Heart right ventricle (tissue), 16 donors: ENCODE measurements at regions of chr7 and their contacts with region 1.

Region 1: DNA sequence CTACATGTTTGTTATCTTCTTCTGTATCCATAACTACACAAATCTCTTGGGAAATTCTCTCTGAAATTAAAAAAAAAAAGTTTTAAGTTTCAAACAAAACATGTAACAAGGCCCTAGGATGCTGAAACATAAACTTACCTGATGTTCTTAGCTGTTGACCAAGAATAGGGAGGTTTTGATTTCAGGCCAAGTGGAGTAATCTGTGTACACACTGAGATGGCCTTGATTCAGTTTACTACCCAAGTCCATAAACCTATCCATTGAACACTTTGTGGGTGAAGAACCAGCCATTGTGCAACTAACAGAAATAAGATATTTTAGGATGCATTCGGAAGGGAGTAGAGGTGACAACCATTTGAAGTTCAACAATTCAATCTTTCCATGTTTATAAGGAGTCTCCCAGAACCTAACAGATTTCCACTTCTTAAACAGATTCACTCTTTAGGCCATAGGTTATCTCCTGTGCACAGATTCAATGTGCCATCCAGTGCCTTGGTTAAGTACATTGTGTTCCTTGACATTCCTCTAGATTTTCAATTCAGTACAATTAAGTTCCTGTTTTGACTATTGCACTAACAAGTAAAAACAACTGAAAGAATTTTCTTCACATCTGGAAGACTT is 143.1 kb downstream of the CRPPA start:
- DNase-seq: no peak
- ATAC-seq: no peak
- H3K4me3 ChIP-seq: no peak overlapping the region
- H3K27ac ChIP-seq: no peak overlapping the region
- H3K4me1 ChIP-seq: peaks cover 0 to 10% (median 0%) of the 10 kb centered on the region in 9 donors
- H3K27me3 ChIP-seq: no peaks in the 10 kb centered on the region
- CTCF ChIP-seq: no peak

Region 2: DNA sequence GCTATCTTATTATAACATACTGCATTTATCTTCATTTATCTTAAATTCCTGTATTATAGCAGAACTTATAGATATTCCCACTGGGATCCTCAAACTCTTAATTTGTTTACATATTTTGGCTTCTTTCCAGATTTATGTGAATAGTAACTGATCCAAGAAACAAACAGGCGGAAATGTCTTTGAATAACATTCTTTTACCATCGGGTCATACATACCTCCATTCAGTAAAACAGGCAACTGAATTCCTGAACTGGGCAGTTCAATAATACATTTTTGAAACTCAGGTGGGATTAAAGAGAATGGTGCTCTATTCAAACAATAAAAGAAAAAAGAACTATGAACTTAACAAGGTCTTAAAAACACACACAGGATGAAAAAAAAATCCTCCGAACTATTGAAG is 194.3 kb before region 1 on chr7:
- intact Hi-C with region 1: no loop called
- DNase-seq: no peak
- ATAC-seq: no peak
- H3K4me3 ChIP-seq: no peak overlapping the region
- H3K27ac ChIP-seq: peak overlapping the region in 2 of 10 donors; percentile 15 to 45
- H3K4me1 ChIP-seq: peaks cover 0 to 3% (median 0%) of the 10 kb centered on the region in 9 donors
- H3K27me3 ChIP-seq: no peaks in the 10 kb centered on the region
- CTCF ChIP-seq: no peak

Region 3: DNA sequence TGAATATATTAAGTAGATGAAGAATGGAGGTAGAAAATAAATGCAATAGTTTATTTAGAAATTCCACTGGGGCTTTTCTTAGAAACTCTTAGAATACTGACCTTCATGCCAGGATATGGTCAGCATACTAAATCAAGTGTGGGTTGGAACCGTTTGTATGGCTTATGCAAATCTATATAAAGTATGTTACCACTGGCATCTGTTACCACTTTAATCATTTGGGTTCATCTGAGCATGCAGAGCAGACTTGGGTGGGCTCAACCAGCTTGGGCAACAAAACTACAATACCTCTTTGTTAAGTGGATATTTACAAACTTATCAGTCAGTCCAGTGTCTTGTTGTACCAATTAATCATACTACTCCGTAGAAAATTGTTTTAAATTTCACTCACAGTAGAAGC is 17.3 kb after region 1 on chr7:
- intact Hi-C with region 1: no loop called
- DNase-seq: no peak
- ATAC-seq: no peak
- H3K4me3 ChIP-seq: no peak overlapping the region
- H3K27ac ChIP-seq: no peak overlapping the region
- H3K4me1 ChIP-seq: peaks cover 0 to 6% (median 0%) of the 10 kb centered on the region in 9 donors
- H3K27me3 ChIP-seq: no peaks in the 10 kb centered on the region
- CTCF ChIP-seq: no peak

Region 4: GRCh38 chr7:16318989-16319915 is 41.0 kb after region 1 on chr7:
- intact Hi-C with region 1: loop called in 1 of 10 experiments (anchors 5 kb)
- DNase-seq: no peak
- ATAC-seq: no peak
- H3K4me3 ChIP-seq: no peak overlapping the region
- H3K27ac ChIP-seq: no peak overlapping the region
- H3K4me1 ChIP-seq: peaks cover 0 to 9% (median 0%) of the 10 kb centered on the region in 9 donors
- H3K27me3 ChIP-seq: no peaks in the 10 kb centered on the region
- CTCF ChIP-seq: no peak